Caco-2 (cell line): ENCODE measurements at regions of chr1 and their contacts with region 1.

Region 1: DNA sequence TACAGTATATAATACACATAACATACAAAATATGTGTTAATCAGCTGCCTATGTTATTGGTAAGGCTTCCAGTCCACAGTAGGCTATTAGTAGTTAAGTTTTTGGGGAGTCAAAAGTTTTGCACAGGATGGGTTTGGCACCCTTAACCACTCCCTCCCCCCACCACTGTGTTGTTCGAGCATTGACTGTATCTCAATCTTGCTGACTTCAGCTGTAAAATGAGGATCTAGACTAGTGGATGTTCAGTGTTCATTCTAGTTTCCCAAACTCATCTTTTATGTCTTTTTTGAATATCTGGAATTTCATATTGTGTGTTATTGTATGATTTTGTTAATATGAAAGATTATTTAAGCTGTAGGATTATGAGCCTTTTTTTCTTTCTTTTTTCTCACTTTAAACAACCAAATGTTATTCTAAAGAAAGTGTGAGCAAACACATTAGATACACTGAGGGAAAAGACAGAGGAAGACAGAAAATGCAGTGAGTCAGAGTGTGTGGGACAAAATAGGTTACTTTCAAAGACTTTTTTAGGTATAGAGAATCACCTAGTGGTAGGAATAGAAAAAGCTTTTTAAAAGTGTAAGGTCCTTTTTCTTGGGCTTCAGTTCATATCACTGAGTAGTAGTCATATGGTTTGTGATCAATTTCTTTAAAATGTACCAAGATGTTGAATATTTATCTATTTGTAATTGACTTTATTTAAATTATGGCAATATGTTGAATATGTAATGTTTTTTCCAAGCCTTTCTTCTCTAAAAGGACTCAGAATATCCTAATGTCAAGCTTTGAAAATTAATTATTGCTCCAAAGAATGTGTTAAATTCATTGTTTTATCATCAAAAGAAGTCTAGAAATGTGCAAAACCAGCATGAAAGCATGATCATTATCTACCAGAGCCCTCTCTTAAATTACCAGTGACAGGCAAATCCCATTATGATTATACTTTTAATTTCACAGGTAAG is 17.9 kb upstream of the CENPF start:
- DNase-seq: peak in 1 of 2 experiments; percentile 17
- H3K4me3 ChIP-seq: no peak overlapping the region
- H3K4me3 Mint-ChIP-seq: no peak overlapping the region
- H3K27ac Mint-ChIP-seq: no peak overlapping the region
- H3K4me1 ChIP-seq: no peaks in the 10 kb centered on the region; the same call in 1 of the 2 replicates
- H3K4me1 Mint-ChIP-seq: peaks cover 7% of the 10 kb centered on the region
- H3K27me3 ChIP-seq: no peaks in the 10 kb centered on the region
- H3K27me3 Mint-ChIP-seq: no peaks in the 10 kb centered on the region
- CTCF ChIP-seq: peak; percentile 46 to 89

Region 2: DNA sequence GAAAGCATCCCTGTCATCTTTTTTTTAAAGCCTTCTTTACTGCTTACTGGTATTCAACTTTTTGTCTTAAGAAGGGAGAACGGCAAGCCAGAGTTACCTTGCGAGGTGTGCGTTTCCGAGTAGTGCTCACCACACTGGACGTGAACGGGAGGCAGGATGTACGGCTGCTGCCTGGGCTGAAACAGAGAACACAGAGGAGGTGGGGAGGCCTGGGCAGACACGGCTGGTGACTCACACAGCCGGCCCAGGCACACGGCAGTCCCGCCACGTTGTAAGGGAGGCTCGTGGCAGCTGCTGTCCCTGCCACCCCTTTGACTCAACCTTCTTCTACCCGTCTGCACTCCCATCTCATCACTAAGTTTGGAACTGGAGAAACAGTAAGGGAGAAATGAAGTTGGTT is 198.3 kb before region 1 on chr1:
- CTCF ChIA-PET with region 1: interaction called, 11 read pairs
- POLR2A ChIA-PET with region 1: no interaction called
- intact Hi-C with region 1: loop called (anchors 1 kb)
- DNase-seq: no peak
- H3K4me3 ChIP-seq: no peak overlapping the region
- H3K4me3 Mint-ChIP-seq: no peak overlapping the region
- H3K27ac Mint-ChIP-seq: peak overlapping the region; percentile 9
- H3K4me1 ChIP-seq: peaks cover 4% of the 10 kb centered on the region
- H3K4me1 Mint-ChIP-seq: peaks cover 6% of the 10 kb centered on the region
- H3K27me3 ChIP-seq: no peaks in the 10 kb centered on the region
- H3K27me3 Mint-ChIP-seq: no peaks in the 10 kb centered on the region
- CTCF ChIP-seq: no peak

Region 3: DNA sequence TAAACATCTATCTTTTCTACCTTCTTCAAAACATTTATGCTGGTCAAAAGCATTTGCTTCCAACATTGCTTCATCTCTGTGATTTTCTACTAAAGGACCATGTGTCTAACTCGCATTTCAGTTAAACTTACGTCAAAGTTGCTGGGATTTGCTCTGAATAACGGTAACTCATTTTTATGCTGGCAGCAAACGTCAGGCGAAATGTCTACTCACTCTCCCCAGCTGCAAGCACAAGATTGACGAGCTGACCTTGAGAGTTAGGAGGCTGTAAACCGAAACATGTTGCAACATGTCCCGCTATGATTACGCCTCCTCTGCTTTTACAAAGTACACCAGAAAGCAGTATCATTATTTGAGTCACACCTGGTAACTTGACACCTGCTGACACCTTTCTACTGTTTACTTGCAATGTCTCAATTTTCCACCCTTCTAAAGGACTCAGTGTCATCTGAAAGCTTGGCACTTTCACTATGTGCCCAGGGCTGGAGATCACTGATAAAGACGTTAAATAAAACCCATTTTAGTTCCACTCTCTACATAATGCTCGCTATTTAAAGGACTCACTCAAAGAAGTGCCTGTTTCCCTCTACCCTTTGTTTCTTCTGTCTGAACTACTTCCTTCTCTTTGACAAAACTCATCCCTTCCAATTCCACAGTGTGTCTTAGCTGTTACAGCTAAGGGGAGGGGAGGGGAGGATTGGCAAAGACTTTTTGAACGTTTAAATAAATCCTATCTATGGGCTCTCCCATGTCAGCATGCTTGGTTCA is 145.6 kb before region 1 on chr1:
- CTCF ChIA-PET with region 1: no interaction called
- POLR2A ChIA-PET with region 1: no interaction called
- intact Hi-C with region 1: loop called (anchors 1 kb)
- DNase-seq: peak; percentile 74 to 82
- H3K4me3 ChIP-seq: no peak overlapping the region
- H3K4me3 Mint-ChIP-seq: peak overlapping the region; percentile 19
- H3K27ac Mint-ChIP-seq: peak overlapping the region; percentile 63
- H3K4me1 ChIP-seq: peaks cover 63% of the 10 kb centered on the region
- H3K4me1 Mint-ChIP-seq: peaks cover 66% of the 10 kb centered on the region
- H3K27me3 ChIP-seq: no peaks in the 10 kb centered on the region
- H3K27me3 Mint-ChIP-seq: no peaks in the 10 kb centered on the region
- CTCF ChIP-seq: no peak

Region 4: GRCh38 chr1:214506972-214507482 is 78.1 kb before region 1 on chr1:
- CTCF ChIA-PET with region 1: no interaction called
- POLR2A ChIA-PET with region 1: no interaction called
- intact Hi-C with region 1: loop called (anchors 5 kb)
- DNase-seq: peak; percentile 97
- H3K4me3 ChIP-seq: peak overlapping the region; percentile 34
- H3K4me3 Mint-ChIP-seq: peak overlapping the region; percentile 65
- H3K27ac Mint-ChIP-seq: peak overlapping the region; percentile 92
- H3K4me1 ChIP-seq: peaks cover 59% of the 10 kb centered on the region
- H3K4me1 Mint-ChIP-seq: peaks cover 47% of the 10 kb centered on the region
- H3K27me3 ChIP-seq: no peaks in the 10 kb centered on the region
- H3K27me3 Mint-ChIP-seq: no peaks in the 10 kb centered on the region
- CTCF ChIP-seq: no peak

Region 5: DNA sequence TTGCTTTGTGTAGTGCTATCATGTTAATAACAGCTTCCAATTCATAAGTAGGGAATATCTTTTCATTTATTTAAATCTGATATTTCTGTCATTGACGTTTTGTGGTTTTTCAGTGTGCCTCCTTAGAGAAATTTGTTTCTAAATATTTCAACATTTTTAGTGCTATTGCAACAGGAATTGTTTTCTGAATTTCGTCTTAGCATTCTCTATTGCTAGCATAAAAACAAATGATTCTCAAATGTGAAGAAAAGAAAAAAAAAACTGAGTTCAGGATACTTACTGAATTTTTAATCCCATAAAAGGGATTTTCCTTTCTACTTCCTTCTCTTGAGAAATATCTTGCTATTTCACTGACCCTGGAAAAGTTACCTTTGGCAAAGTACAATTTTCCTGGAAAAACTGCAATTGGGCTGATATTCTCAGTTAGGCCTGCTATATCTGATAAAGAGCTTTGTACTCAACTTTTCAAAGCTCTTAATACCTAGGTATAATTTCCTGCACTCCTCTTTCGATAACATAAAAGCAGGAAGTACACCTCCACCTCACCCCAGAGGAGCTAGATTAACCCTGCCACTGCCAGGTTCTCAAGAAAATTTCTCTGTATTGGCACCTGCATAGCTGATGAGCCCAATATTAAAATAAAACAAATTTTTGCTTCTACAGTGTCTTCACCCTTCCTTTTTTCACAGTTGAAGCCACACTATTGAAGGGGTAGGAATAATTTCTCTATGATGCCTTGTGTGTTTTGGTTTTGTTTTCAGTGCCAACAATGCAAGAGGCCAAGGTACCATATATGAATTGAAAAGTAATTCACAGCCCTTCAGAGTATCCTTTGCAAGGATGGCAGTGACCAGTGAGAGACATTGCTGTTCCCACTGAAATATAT is 69.3 kb before region 1 on chr1:
- CTCF ChIA-PET with region 1: no interaction called
- POLR2A ChIA-PET with region 1: no interaction called
- intact Hi-C with region 1: loop called (anchors 2 kb)
- DNase-seq: no peak
- H3K4me3 ChIP-seq: 0 out of 2 replicates have a peak overlapping the region, but pooled peaks have one; percentile 1
- H3K4me3 Mint-ChIP-seq: peak overlapping the region; percentile 75
- H3K27ac Mint-ChIP-seq: peak overlapping the region; percentile 91
- H3K4me1 ChIP-seq: peaks cover 65% of the 10 kb centered on the region
- H3K4me1 Mint-ChIP-seq: peaks cover 55% of the 10 kb centered on the region
- H3K27me3 ChIP-seq: no peaks in the 10 kb centered on the region
- H3K27me3 Mint-ChIP-seq: no peaks in the 10 kb centered on the region
- CTCF ChIP-seq: no peak

Region 6: GRCh38 chr1:214912127-214912526 is 327.0 kb after region 1 on chr1:
- CTCF ChIA-PET with region 1: no interaction called
- POLR2A ChIA-PET with region 1: no interaction called
- intact Hi-C with region 1: no loop called
- DNase-seq: no peak
- H3K4me3 ChIP-seq: no peak overlapping the region
- H3K4me3 Mint-ChIP-seq: no peak overlapping the region
- H3K27ac Mint-ChIP-seq: no peak overlapping the region
- H3K4me1 ChIP-seq: no peaks in the 10 kb centered on the region
- H3K4me1 Mint-ChIP-seq: no peaks in the 10 kb centered on the region
- H3K27me3 ChIP-seq: no peaks in the 10 kb centered on the region
- H3K27me3 Mint-ChIP-seq: peaks cover 7% of the 10 kb centered on the region
- CTCF ChIP-seq: no peak